Upper lobe of right lung (tissue), 1 donor: ENCODE measurements at regions of chr12 and their contacts with region 1.

Region 1: GRCh38 chr12:68223083-68223747 is 2.4 kb downstream of the IL26 start:
- DNase-seq: peak; percentile 78
- ATAC-seq: peak; percentile 100
- H3K4me3 ChIP-seq: peak overlapping the region; percentile 3
- H3K27ac ChIP-seq: no peak overlapping the region
- H3K4me1 ChIP-seq: no peaks in the 10 kb centered on the region
- H3K27me3 ChIP-seq: no peaks in the 10 kb centered on the region
- CTCF ChIP-seq: peak; percentile 88

Region 2: DNA sequence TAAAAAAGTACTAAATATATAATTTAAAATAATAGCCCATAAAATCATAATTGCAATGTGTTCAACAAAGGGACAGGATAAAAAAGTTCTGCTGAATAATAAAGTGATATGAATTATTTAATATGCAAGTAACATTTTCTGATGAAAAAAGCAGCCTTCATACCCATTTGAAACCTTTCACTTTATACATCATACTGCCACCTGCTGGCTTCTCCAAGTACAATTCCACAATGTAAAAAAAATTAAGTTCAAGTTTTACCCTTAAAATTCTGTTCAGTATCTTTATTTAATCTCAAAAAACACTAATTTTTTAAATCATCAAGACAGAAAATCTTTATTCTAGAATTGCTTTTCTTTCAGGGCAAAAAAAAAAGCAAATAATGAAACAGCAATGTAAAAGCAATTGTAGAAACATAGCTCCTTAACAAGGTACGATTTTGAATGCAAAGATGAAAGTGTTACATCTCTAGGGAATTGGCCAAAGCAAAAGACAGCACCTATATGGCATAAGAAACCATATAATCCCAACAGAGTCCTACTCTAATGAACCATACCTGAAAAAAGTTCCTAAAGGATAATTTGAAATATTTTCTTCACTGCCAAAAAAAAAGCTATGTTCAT is 93.9 kb after region 1 on chr12:
- intact Hi-C with region 1: loop called (anchors 5 kb)
- DNase-seq: no peak
- ATAC-seq: peak; percentile 45
- H3K4me3 ChIP-seq: no peak overlapping the region
- H3K27ac ChIP-seq: no peak overlapping the region
- H3K4me1 ChIP-seq: no peaks in the 10 kb centered on the region
- H3K27me3 ChIP-seq: no peaks in the 10 kb centered on the region
- CTCF ChIP-seq: peak; percentile 77